ENCODE measurements at regions of chr1 and their contacts with region 1.

Region 1: DNA sequence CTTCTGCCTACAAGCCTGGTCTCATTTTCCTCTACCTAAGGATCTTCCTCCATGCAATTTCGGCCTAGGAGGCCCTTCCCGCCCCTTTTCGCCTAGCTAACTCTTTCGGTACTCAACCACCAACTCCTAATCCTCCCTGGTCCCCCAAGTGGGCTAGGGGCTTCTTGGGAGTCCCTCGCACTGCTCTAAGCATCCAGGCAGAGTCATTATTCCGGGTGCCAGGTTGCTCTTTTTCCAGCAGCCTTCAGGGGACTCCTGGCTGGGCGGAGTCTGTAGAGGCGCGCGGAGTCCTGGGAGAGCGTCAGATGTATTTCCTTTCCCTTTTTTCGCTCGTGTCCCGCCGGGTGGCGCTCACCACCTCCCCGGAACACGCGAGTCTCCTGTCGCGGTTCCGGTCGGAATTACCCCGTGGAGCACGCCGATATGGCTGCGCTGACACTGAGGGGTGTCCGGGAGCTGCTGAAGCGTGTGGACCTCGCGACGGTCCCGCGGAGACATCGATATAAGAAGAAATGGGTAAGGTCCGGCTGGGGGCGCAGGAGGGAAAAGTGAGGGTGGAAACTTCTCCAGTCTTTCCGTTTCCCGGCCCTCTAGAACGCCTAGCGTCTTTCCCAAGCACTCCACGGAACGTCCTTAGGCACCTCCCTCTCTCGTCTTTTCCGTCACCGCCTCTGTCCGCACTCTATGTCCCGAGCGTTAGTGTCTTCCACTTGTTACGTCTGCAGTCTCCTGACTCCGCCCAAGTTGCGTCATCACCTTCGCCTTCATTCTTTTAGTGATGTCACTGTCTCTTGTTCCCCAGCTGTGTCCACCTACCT is at the start of gene NSUN4:
- DNase-seq: peak; percentile 96
- H3K4me3 Mint-ChIP-seq: peak within 1 kb of the TSS; percentile 99
- H3K27ac Mint-ChIP-seq: peak within 1 kb of the TSS; percentile 100
- H3K4me1 Mint-ChIP-seq: peaks cover 33% of the 10 kb centered on the region
- H3K27me3 Mint-ChIP-seq: no peaks in the 10 kb centered on the region
- total RNA-seq, gene NSUN4: 40.4 and 46.5 TPM in 2 replicates

Region 2: DNA sequence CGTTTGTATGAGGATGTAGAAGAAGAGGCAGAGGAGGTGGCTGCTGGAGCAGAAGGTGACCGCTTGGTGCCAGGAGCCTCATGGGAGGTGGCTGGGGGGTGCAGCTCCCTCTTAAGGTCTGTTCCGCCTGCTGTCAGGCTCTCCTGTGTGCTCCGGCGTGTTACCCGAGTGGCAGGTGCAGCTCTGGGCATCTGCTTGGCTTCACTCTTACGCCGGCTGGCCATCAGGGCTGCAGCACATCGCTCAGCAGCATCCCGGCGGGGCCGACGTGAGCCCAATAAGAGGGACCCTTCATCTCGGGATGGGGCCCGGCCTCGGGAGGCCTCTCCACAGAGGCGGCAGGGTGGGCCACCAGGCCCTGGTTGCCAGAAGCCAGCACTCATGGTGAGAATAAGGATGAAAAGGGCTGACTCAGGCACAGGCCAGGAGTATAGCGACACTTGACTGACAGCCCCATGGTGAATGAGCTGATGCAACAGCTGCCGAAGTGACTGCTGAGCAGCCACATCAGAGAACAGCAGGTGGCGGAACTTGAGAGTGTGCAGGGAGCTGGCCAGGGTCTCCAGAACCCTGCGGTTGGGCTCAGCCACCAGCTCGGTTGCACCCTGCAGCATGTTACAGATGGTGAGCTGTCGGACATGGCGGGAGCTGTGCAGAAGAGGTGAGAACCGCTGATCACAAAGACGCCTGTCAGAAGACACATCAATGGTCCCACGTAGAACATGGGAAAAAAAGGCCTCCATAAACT is 54.7 kb before region 1 on chr1:
- intact Hi-C with region 1: loop called (anchors 5 kb)
- DNase-seq: peak; percentile 81
- H3K4me3 Mint-ChIP-seq: no peak overlapping the region
- H3K27ac Mint-ChIP-seq: peak overlapping the region; percentile 74
- H3K4me1 Mint-ChIP-seq: peaks cover 21% of the 10 kb centered on the region
- H3K27me3 Mint-ChIP-seq: no peaks in the 10 kb centered on the region

Region 3: GRCh38 chr1:46303038-46303871 is 37.4 kb before region 1 on chr1 and contains the starts of genes LRRC41 and UQCRH:
- intact Hi-C with region 1: loop called (anchors 1 kb)
- DNase-seq: peak; percentile 98
- H3K4me3 Mint-ChIP-seq: peak within 1 kb of the TSS; percentile 99
- H3K27ac Mint-ChIP-seq: peak within 1 kb of the TSS; percentile 98
- H3K4me1 Mint-ChIP-seq: peaks cover 39% of the 10 kb centered on the region
- H3K27me3 Mint-ChIP-seq: no peaks in the 10 kb centered on the region
- total RNA-seq, gene LRRC41: 63.1 and 64.6 TPM in 2 replicates
- total RNA-seq, gene UQCRH: 283 and 306 TPM in 2 replicates

Region 4: GRCh38 chr1:46425726-46426125 is 85.1 kb after region 1 on chr1:
- intact Hi-C with region 1: no loop called
- DNase-seq: no peak
- H3K4me3 Mint-ChIP-seq: no peak overlapping the region
- H3K27ac Mint-ChIP-seq: no peak overlapping the region
- H3K4me1 Mint-ChIP-seq: no peaks in the 10 kb centered on the region
- H3K27me3 Mint-ChIP-seq: no peaks in the 10 kb centered on the region

Measured in activated CD4-positive, alpha-beta T cell treated with anti-CD3 and anti-CD28 coated beads, Interleukin-2, amount 10 ng/mL, durations not matched to agents 24 days and 14 days (primary cell).